Heart left ventricle (tissue), 16 donors: ENCODE measurements at regions of chr18 and their contacts with region 1.

Region 1: GRCh38 chr18:22169007-22169864 is at the start of gene GATA6:
- DNase-seq: peak; percentile 90 to 96 (median 92)
- ATAC-seq: peak; percentile 74 to 85 (median 76)
- H3K4me3 ChIP-seq: peak within 1 kb of the TSS; percentile 66 to 99 (median 86)
- H3K27ac ChIP-seq: peak within 1 kb of the TSS; percentile 92 to 100 (median 98)
- H3K4me1 ChIP-seq: peaks cover 0 to 40% (median 8%) of the 10 kb centered on the region in 12 donors
- H3K27me3 ChIP-seq: peaks cover 0 to 75% (median 9%) of the 10 kb centered on the region in 9 donors
- CTCF ChIP-seq: peak in 9 of 12 donors; percentile 17 to 64 (median 47)
- POLR2A ChIP-seq: peak; percentile 50 to 91
- total RNA-seq, gene GATA6: 44.9 to 97.7 (median 76.3) TPM

Region 2: DNA sequence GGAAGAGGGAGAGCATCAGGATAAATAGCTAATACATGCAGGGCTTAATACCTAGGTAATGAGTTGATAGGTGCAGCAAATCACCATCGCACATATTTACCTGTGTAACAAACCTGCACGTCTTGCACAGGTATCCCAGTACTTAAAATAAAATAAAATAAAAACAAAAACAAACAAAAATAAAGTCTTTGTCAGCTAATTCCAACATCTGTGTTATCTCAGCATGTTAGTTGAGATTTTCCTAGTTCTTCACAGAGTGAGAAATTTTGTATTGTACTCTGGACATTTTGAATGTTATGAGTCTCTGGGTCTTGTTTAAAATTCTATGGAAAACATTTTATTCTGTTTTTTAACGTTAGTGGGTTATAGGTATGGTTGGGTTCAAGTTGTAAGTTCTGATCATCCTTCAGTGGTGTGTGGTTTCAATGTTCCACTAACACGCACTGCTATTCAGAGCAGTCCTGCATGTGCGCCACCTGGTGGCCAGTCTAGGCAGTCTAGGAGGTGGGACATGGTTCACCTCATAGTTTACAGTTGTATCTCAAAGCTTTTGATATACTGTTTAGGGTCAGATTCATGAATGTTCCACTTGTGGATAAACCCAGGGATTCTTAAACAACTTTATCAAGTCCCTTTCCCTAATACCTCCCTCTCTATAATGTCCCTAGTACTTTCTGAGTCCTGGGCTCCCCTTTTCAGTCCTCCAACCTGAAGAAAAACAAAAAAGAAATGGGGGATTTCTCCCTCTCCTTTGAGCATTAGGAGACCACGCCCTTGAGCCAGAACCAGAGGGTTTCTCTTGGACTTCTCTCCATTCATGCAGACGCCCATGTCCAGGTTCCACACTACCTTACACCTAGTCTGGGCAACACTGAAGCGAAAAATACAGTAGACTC is 213.2 kb before region 1 on chr18:
- intact Hi-C with region 1: loop called in 1 of 10 experiments (anchors 5 kb)
- DNase-seq: peak; percentile 67 to 90 (median 76)
- ATAC-seq: peak; percentile 71 to 94 (median 92)
- H3K4me3 ChIP-seq: no peak overlapping the region
- H3K27ac ChIP-seq: no peak overlapping the region
- H3K4me1 ChIP-seq: peaks cover 0 to 12% (median 0%) of the 10 kb centered on the region in 12 donors
- H3K27me3 ChIP-seq: peaks cover 0 to 3% (median 0%) of the 10 kb centered on the region in 9 donors
- CTCF ChIP-seq: peak; percentile 86 to 95 (median 90)
- POLR2A ChIP-seq: no peak

Region 3: GRCh38 chr18:22074282-22075069 is 94.8 kb before region 1 on chr18:
- intact Hi-C with region 1: no loop called
- DNase-seq: no peak
- ATAC-seq: no peak
- H3K4me3 ChIP-seq: no peak overlapping the region
- H3K27ac ChIP-seq: no peak overlapping the region
- H3K4me1 ChIP-seq: no peaks in the 10 kb centered on the region
- H3K27me3 ChIP-seq: no peaks in the 10 kb centered on the region
- CTCF ChIP-seq: no peak
- POLR2A ChIP-seq: no peak

Region 4: DNA sequence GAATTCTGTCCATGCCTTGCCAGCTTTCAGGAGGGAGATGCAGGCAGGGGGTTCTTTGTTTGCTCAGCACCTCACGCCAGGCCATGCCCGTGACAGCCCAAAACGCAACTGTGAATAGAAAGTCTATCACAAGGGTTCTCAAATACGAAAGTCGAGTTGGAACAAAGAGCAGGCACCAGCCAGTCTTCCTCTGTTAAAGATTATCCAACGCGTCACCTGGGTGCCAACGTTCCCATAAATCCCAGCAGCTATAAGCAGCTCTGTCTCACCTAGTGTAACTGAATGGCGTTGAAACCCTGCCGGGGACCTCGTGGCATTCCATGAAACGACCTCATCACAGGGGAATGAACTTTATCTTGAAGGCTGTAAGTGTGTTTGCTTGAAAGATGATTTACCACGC is 84.7 kb before region 1 on chr18:
- intact Hi-C with region 1: loop called in 5 of 10 experiments (anchors 5 to 10 kb)
- DNase-seq: peak in 4 of 5 donors; percentile 60 to 68 (median 68)
- ATAC-seq: peak; percentile 55 to 86 (median 80)
- H3K4me3 ChIP-seq: no peak overlapping the region
- H3K27ac ChIP-seq: peak overlapping the region in 9 of 12 donors; percentile 49 to 86 (median 62)
- H3K4me1 ChIP-seq: peaks cover 0 to 22% (median 4%) of the 10 kb centered on the region in 12 donors
- H3K27me3 ChIP-seq: no peaks in the 10 kb centered on the region
- CTCF ChIP-seq: no peak
- POLR2A ChIP-seq: no peak

Region 5: DNA sequence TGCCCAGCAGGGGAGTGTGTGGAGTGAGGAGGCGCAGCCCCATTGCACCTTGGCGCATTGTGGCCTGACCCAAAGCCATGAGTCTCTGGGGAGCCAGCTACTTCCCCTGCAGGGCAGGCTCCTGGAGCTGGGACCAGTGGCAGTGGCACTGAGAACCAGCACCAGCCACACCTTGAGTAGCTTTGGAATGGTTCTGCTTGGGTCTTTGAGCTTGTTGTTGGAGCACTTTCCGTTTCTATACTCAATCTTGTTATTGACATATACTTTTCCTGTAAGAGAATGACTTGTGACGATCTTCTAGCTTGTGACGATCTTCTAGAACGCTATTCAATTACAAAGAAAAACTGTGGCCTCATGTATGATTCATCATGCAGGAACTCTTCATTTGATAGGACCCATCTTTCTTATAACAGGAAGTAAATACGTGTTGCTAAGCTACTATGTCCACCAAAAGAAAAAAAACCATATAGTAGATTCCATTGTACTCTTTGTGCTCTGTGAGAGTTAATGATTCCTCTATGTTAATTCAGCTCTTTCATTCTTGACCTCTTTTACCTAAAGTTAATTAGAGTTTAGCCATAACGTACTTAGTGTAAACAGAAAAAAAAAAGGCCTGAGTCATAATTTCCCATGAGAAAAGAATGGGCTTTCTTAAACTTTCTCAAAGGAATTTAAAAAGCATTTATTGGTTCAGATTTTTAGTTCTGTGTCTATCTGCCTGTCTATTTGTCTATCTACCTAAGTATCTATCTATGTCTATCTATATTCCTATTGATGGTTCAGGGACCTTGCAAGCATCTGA is 113.3 kb after region 1 on chr18:
- intact Hi-C with region 1: loop called in 3 of 10 experiments (anchors 5 to 10 kb)
- DNase-seq: no peak
- ATAC-seq: peak in 2 of 4 donors; percentile 21 to 33
- H3K4me3 ChIP-seq: no peak overlapping the region
- H3K27ac ChIP-seq: peak overlapping the region in 1 of 12 donors; percentile 66
- H3K4me1 ChIP-seq: peaks cover 0 to 50% (median 15%) of the 10 kb centered on the region in 12 donors
- H3K27me3 ChIP-seq: no peaks in the 10 kb centered on the region
- CTCF ChIP-seq: no peak
- POLR2A ChIP-seq: no peak

Region 6: GRCh38 chr18:22465859-22466457 is 296.7 kb after region 1 on chr18:
- intact Hi-C with region 1: loop called in 5 of 10 experiments (anchors 5 to 10 kb)
- DNase-seq: peak in 4 of 5 donors; percentile 51 to 71 (median 60)
- ATAC-seq: peak; percentile 92 to 94 (median 94)
- H3K4me3 ChIP-seq: peak overlapping the region in 1 of 12 donors; percentile 1
- H3K27ac ChIP-seq: peak overlapping the region; percentile 65 to 96 (median 86)
- H3K4me1 ChIP-seq: peaks cover 0 to 49% (median 34%) of the 10 kb centered on the region in 12 donors
- H3K27me3 ChIP-seq: no peaks in the 10 kb centered on the region
- CTCF ChIP-seq: no peak
- POLR2A ChIP-seq: peak in 1 of 2 donors; percentile 6

Region 7: DNA sequence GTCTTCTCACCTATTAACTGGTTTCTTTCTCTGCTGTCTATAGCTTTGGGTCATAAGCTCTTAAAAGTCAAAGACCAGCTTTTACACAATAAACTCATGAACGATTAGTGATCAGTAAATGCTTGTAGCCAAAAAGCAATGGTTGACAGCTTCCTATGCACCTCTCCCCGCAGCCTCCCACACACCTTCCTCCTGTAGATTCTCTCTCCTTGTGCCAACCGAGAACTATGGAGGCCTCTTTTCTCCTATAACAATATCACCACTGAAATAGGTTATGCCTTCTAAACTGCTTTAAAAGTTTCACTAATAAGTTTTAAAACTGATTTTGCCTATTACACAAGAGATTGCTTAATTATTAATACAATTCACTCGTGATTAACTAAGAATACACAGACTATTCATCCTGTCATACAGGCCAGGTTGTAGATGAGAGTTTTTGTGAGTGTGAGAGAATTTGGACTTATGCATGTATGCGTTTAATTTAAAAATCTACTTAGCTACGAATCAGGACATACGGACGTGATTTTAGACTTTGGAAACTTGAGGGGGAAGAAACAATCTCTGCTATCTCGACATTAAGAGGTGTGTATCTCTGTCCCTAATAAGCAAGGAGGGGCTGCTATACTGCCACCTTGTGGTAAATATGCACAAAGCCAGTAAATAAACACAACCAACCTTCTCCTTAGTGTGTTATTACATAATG is 534.8 kb after region 1 on chr18:
- intact Hi-C with region 1: loop called in 3 of 10 experiments (anchors 10 kb)
- DNase-seq: peak in 1 of 5 donors; percentile 16
- ATAC-seq: peak; percentile 68 to 82 (median 72)
- H3K4me3 ChIP-seq: no peak overlapping the region
- H3K27ac ChIP-seq: no peak overlapping the region
- H3K4me1 ChIP-seq: peaks cover 0 to 12% (median 0%) of the 10 kb centered on the region in 12 donors
- H3K27me3 ChIP-seq: no peaks in the 10 kb centered on the region
- CTCF ChIP-seq: peak; percentile 72 to 95 (median 82)
- POLR2A ChIP-seq: no peak